BJ (cell line): ENCODE measurements at regions of chr1 and their contacts with region 1.

Region 1: GRCh38 chr1:6033986-6034749 is 11.5 kb upstream of the KCNAB2 start:
- DNase-seq: no peak
- H3K4me3 ChIP-seq: no peak overlapping the region
- H3K27me3 ChIP-seq: peaks cover 2% of the 10 kb centered on the region; the same call in 1 of the 2 replicates
- CTCF ChIP-seq: peak; percentile 75

Region 2: GRCh38 chr1:5570926-5571325 is 463.2 kb before region 1 on chr1:
- CTCF ChIA-PET with region 1: no interaction called
- POLR2A ChIA-PET with region 1: no interaction called
- DNase-seq: no peak
- H3K4me3 ChIP-seq: no peak overlapping the region
- H3K27me3 ChIP-seq: no peaks in the 10 kb centered on the region
- CTCF ChIP-seq: no peak

Region 3: GRCh38 chr1:6045110-6045502 is 10.9 kb after region 1 on chr1:
- CTCF ChIA-PET with region 1: interaction called, 14 read pairs
- POLR2A ChIA-PET with region 1: no interaction called
- DNase-seq: no peak
- H3K4me3 ChIP-seq: no peak overlapping the region
- H3K27me3 ChIP-seq: no peaks in the 10 kb centered on the region
- CTCF ChIP-seq: no peak

Region 4: DNA sequence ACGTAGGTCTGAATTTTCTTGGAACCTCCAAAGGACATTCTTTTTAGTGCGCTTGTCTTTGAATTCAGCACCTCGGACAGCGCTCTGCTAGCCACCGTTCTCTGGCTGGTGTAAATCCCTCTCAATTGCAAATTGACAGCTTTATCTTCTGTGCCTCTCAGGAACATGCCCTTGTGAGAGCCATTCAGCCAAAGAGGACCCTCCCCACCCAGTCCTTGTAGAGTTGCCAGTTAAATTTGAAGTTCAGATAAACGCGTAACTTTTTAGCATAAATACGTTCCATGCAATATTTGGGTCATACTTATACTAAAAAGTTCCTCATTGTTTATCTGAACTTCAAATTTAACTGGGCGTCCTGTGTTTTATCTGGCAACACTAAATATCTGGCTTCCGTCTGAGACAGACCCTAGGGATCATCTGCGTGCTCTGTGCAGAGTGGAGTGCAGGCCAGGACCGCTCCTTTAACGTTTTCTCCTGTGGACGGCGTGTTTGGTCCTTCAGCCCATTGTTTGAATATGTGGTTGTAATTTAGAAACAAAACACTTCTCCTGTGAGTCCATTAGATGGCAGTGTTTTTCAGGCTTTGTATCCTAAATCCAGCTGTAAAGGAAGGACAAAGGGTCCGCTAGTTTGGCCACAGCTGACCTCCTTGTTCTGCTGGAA is 18.5 kb after region 1 on chr1:
- CTCF ChIA-PET with region 1: interaction called, 12 read pairs
- POLR2A ChIA-PET with region 1: no interaction called
- DNase-seq: no peak
- H3K4me3 ChIP-seq: no peak overlapping the region
- H3K27me3 ChIP-seq: 0 out of 2 replicates have a peak, but pooled peaks cover 2% of the 10 kb centered on the region
- CTCF ChIP-seq: peak; percentile 55